Head of caudate nucleus (tissue), 42 donors: ENCODE measurements at regions of chr4 and their contacts with region 1.

Region 1: GRCh38 chr4:151015459-151016347 is 619 bp upstream of the LRBA start:
- DNase-seq: peak; percentile 64 to 93 (median 84)

Region 2: DNA sequence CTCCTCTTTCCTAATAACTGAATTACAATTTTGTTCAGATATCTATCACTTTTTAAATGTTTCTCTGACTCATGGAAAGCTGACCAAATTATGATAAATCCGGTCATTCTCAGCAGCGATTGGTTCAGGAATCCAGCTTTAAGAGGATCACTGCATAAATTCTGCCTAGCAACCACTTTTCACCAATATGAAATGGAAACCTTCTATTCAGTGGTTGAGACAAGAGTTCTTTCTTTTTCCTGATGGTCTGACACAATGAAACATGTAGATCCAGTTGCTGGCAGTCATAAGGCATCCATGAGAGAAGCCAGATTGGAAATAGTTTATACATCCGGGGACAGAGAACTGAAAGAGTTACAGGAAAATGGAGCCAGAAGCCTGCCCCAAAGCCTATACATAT is 406.6 kb before region 1 on chr4:
- intact Hi-C with region 1: no loop called
- DNase-seq: no peak

Region 3: DNA sequence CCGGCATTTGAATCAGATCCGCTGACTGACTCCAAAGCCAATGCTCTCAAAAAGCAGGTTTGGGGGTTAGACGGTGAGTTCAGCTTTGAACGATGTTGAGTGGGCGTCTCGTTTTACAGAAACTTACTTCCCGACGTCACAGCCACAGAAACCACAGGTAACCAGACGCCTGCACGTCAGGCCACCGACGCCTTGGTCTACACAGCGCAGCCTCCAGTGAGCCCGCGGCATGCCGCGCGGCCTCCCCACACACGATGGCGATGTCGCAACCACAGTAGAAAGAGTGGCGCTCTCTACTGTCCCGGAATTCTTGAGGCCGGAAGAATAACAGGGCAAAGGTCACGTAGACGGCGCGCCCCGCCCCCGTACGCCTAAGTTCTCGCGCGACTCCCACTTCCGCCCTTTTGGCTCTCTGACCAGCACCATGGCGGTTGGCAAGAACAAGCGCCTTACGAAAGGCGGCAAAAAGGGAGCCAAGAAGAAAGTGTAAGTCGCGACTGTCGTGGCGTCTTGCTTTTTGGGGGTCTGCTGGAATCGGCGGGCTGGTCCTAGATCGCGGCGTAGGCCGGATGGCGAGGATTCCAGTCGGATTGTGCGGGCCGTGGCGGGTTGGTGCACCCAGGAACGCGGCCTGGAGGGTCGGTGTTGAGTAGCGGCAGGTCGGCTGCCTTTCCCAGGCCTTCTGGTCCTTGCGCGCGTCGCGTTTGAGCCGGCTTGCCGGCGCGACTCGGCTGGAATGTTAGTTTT is 83.7 kb after region 1 on chr4 and contains the start of gene RPS3A:
- intact Hi-C with region 1: loop called (anchors 10 kb)
- DNase-seq: peak; percentile 91 to 99 (median 97)